Kidney (tissue), 22 donors: ENCODE measurements at regions of chr2 and their contacts with region 1.

Region 1: DNA sequence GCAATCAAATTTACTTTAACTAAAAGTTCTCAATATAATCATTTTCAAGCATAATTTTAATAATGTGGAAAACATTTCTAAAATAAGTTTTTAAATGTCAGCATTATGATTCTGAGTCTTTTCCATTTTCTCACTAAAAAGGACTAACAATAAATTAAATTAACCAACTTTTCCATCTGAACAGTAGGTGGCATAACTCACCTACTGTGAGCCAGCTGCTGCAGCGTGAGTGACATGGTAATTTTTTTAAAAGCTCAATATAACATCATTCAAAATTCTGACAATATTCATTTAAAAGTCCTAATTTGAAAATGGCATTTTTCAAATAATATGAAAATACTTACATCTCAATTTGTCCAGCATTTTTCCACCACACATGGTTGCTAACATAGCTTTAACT is 66.5 kb downstream of the DTNB start:
- DNase-seq: peak in 2 of 5 donors; percentile 27 to 56
- H3K4me3 ChIP-seq: no peak overlapping the region
- H3K27ac ChIP-seq: no peak overlapping the region
- H3K4me1 ChIP-seq: no peaks in the 10 kb centered on the region
- H3K27me3 ChIP-seq: no peaks in the 10 kb centered on the region
- CTCF ChIP-seq: peak; percentile 67

Region 2: GRCh38 chr2:24886691-24887304 is 720.1 kb before region 1 on chr2:
- intact Hi-C with region 1: no loop called
- DNase-seq: peak in 4 of 5 donors; percentile 69 to 78 (median 72)
- H3K4me3 ChIP-seq: no peak overlapping the region
- H3K27ac ChIP-seq: peak overlapping the region; percentile 8 to 33
- H3K4me1 ChIP-seq: peaks cover 0 to 9% (median 0%) of the 10 kb centered on the region in 3 donors
- H3K27me3 ChIP-seq: no peaks in the 10 kb centered on the region
- CTCF ChIP-seq: no peak

Region 3: GRCh38 chr2:25453199-25453905 is 153.5 kb before region 1 on chr2:
- intact Hi-C with region 1: no loop called
- DNase-seq: no peak
- H3K4me3 ChIP-seq: no peak overlapping the region
- H3K27ac ChIP-seq: no peak overlapping the region
- H3K4me1 ChIP-seq: no peaks in the 10 kb centered on the region
- H3K27me3 ChIP-seq: no peaks in the 10 kb centered on the region
- CTCF ChIP-seq: no peak

Region 4: DNA sequence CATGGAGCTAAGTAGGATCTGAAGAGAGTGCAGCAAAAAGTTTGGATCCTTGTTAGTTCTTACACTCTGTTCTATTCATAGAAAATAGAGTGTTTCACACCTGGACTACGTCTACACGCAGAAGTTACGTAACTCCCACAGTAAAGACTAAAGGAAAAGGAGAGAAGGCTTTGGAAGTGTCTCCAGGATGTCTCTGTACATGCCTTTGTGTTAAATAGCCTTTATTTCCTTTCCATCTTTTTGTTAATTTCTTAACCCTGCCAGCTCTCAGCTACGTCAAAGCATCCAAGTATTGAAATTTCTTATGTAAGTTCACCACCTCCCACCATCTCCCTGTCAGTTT is 58.0 kb after region 1 on chr2:
- intact Hi-C with region 1: loop called (anchors 5 kb)
- DNase-seq: no peak
- H3K4me3 ChIP-seq: no peak overlapping the region
- H3K27ac ChIP-seq: no peak overlapping the region
- H3K4me1 ChIP-seq: no peaks in the 10 kb centered on the region
- H3K27me3 ChIP-seq: no peaks in the 10 kb centered on the region
- CTCF ChIP-seq: no peak

Region 5: DNA sequence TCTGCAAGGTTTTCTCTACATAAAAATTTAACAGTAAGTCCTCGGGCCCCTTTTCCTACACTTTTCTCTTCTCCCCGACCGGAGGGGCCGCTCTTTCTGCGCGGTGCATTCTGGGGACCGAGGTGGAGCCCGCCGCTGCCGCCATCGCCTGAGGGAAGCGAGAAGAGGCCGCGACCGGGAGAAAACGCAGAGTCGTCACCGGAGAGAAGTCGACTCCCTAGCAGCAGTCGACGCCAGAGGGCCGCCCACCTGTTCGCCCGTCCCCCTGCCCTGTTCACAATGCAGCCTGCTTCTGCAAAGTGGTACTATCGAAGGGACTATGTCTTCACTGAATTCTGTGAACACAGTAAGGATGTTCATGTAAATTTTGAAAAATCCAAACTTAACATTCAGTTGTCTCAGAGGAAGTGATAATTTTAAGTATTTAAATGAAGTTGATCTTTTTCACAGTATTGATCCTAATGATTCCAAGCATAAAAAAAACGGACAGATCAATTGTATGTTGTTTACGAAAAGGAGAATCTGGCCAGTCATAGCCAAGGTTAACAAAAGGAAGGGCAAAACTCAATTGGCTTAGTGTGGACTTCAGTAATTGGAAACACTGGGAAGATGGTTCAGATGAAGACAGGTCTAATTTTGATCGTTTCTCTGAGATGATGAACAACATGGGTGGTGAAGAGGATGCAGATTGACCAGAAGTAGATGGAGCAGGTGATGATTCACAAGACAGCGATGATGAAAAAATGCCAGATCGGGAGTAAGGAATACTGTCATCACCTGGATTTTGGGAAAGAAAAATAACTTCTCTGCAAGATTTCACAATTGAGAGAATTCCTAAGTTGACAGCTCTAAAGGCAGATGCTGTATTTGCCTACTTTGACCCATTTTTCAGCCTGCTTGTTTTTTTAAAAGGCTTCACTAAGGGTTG is 215.6 kb after region 1 on chr2:
- intact Hi-C with region 1: no loop called
- DNase-seq: peak; percentile 74 to 83 (median 77)
- H3K4me3 ChIP-seq: peak overlapping the region; percentile 45 to 56 (median 53)
- H3K27ac ChIP-seq: no peak overlapping the region
- H3K4me1 ChIP-seq: peaks cover 0 to 5% (median 0%) of the 10 kb centered on the region in 3 donors
- H3K27me3 ChIP-seq: no peaks in the 10 kb centered on the region
- CTCF ChIP-seq: no peak